ENCODE measurements at regions of chr1 and their contacts with region 1.

Region 1: GRCh38 chr1:44237721-44238457 is 24.6 kb downstream of the DMAP1 start:
- DNase-seq: peak; percentile 86
- CTCF ChIP-seq: peak; percentile 46

Region 2: DNA sequence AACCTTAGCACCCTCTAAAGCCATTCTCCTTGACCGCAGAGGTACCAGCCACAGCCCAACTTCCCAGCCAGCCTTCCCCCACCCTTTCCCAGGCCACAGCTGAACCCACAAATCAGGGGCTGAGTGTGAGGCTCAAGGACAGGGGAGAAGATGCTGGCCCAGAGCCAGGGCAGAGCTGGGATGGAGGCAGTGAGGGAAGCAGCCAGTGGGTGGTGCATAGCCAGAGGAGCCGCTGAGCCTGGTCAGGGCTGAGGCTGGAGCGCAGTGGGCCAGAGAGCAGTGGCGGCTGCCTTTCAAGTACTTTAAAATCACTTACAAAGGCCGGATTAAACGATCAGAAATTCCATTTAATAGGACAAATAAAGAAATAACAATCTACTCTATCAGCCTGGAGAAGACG is 11.7 kb after region 1 on chr1:
- CTCF ChIA-PET with region 1: interaction called, 16 read pairs
- POLR2A ChIA-PET with region 1: no interaction called
- DNase-seq: no peak
- CTCF ChIP-seq: no peak

Measured in GM10248 (cell line).